ENCODE measurements at regions of chr17 and their contacts with region 1.

Region 1: DNA sequence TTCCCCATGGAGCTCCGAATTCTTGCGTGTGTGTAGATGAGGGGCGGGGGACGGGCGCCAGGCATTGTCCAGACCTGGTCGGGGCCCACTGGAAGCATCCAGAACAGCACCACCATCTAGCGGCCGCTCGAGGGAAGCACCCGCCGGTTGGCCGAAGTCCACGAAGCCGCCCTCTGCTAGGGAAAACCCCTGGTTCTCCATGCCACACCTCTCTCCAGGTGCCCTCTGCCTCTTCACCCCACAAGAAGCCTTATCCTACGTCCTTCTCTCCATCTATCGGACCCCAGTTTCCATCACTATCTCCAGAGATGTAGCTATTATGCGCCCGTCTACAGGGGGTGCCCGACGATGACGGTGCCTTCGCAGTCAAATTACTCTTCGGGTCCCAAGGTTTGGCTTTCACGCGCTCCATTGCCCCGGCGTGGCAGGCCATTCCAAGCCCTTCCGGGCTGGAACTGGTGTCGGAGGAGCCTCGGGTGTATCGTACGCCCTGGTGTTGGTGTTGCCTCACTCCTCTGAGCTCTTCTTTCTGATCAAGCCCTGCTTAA is 617 bp upstream of the SENP3 start:
- DNase-seq: peak; percentile 94 to 95 (median 95)
- ATAC-seq: peak; percentile 77 to 87 (median 80)
- H3K4me3 ChIP-seq: peak overlapping the region; percentile 82 to 99 (median 94)
- H3K27ac ChIP-seq: peak overlapping the region; percentile 72 to 79 (median 78)
- H3K4me1 ChIP-seq: peaks cover 0 to 30% (median 15%) of the 10 kb centered on the region in 4 donors
- H3K27me3 ChIP-seq: no peaks in the 10 kb centered on the region
- CTCF ChIP-seq: peak; percentile 78 to 88 (median 84)
- POLR2A ChIP-seq: no peak

Region 2: GRCh38 chr17:7515911-7516610 is 45.0 kb before region 1 on chr17:
- intact Hi-C with region 1: loop called (anchors 5 to 10 kb)
- DNase-seq: no peak
- ATAC-seq: peak in 3 of 4 donors; percentile 51 to 77 (median 72)
- H3K4me3 ChIP-seq: no peak overlapping the region
- H3K27ac ChIP-seq: no peak overlapping the region
- H3K4me1 ChIP-seq: peaks cover 0 to 11% (median 0%) of the 10 kb centered on the region in 4 donors
- H3K27me3 ChIP-seq: no peaks in the 10 kb centered on the region
- CTCF ChIP-seq: no peak
- POLR2A ChIP-seq: no peak

Region 3: GRCh38 chr17:7614422-7615264 is 53.5 kb after region 1 on chr17 and contains the start of gene FXR2:
- intact Hi-C with region 1: no loop called
- DNase-seq: peak; percentile 100
- ATAC-seq: peak; percentile 96 to 99 (median 97)
- H3K4me3 ChIP-seq: peak within 1 kb of the TSS; percentile 61 to 83 (median 76)
- H3K27ac ChIP-seq: peak within 1 kb of the TSS; percentile 55 to 88 (median 82)
- H3K4me1 ChIP-seq: peaks cover 0 to 36% (median 9%) of the 10 kb centered on the region in 4 donors
- H3K27me3 ChIP-seq: no peaks in the 10 kb centered on the region
- CTCF ChIP-seq: peak; percentile 52 to 64 (median 58)
- POLR2A ChIP-seq: peak; percentile 87
- total RNA-seq, gene FXR2: 14.3 to 23.2 (median 16.7) TPM

Region 4: DNA sequence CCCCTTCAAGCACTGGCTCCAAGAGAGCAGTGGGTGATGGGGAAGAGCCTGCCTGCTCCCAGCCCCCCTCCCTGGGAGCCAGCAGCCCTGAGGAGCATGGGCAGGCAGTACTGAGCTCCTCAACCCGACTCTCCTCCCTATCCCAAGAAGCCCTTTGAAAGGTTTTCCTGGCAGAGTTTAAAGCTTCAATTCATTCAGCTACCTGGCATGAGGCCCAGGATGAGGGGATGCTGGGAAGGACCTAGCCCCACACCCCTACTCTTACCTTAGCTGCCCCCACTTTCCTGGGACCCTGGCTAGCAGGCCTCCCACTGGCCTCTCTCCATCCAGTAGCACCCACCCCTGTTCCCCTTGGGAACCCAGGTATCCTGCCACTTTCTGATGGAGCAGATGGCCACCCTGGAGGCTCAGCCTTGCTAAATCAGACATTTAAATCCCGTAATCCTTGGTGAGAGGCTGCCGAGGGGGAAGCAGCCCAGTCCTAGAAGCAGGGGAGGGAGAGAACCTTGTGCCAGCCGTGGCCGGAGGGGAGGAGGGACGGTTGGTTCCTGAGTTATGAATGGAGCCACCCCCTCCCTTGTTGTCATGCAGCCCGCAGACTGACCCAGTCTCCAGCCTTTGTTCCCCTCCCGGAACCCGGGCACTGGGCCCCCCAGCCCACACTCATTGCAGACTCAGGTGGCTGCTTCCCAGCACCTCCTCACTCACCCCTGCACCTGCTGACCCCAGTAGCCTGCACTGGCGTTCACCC is 106.7 kb after region 1 on chr17:
- intact Hi-C with region 1: no loop called
- DNase-seq: no peak
- ATAC-seq: peak in 1 of 4 donors; percentile 39
- H3K4me3 ChIP-seq: no peak overlapping the region
- H3K27ac ChIP-seq: no peak overlapping the region
- H3K4me1 ChIP-seq: no peaks in the 10 kb centered on the region
- H3K27me3 ChIP-seq: no peaks in the 10 kb centered on the region
- CTCF ChIP-seq: no peak
- POLR2A ChIP-seq: no peak